Transverse colon (tissue), 4 donors: ENCODE measurements at regions of chr9 and their contacts with region 1.

Region 1: DNA sequence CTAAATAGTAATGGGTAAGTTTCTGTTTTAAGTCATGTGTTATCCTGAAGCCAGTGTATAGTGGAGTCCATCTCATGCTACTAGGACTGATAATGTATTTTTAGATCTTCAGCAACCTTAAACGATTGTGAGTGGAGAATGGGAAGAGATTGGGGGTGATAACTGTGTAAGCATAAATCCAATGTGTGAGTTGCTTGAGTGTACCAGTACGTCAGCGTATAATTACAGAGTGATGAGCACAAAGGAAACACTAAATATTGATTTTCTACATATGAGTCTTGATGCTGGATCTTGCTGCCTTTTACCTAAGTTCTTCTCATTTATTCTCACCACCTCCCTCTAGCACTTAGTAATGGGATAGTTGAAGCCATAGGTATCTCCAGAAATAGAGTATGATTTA is 16.3 kb upstream of the IZUMO3 start:
- DNase-seq: no peak
- H3K4me3 ChIP-seq: no peak overlapping the region
- H3K27ac ChIP-seq: no peak overlapping the region
- H3K4me1 ChIP-seq: no peaks in the 10 kb centered on the region
- H3K27me3 ChIP-seq: no peaks in the 10 kb centered on the region
- CTCF ChIP-seq: no peak
- EP300 ChIP-seq: no peak
- POLR2A ChIP-seq: no peak

Region 2: DNA sequence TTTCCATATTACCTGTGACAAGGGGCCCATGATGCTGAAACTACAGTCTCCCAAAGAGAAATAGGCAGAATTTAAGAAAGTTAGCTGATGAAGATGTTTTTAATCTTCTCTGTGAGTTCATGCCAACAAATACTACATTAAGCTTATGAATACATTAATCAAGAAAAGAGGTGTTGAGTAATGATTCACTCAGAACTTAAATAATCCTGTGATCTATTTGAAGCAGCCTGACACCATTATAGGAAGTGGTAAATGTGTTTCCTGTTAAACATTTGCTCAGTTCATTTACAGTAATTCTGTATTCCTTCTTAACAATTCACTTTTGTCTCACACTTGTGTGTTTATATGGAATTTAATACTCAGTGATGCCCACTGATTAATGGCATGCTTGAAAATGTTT is 58.8 kb after region 1 on chr9:
- in situ Hi-C with region 1: loop called in 1 of 4 experiments (anchors 10 kb)
- intact Hi-C with region 1: no loop called
- DNase-seq: no peak
- H3K4me3 ChIP-seq: no peak overlapping the region
- H3K27ac ChIP-seq: no peak overlapping the region
- H3K4me1 ChIP-seq: no peaks in the 10 kb centered on the region
- H3K27me3 ChIP-seq: no peaks in the 10 kb centered on the region
- CTCF ChIP-seq: no peak
- EP300 ChIP-seq: no peak
- POLR2A ChIP-seq: no peak

Region 3: DNA sequence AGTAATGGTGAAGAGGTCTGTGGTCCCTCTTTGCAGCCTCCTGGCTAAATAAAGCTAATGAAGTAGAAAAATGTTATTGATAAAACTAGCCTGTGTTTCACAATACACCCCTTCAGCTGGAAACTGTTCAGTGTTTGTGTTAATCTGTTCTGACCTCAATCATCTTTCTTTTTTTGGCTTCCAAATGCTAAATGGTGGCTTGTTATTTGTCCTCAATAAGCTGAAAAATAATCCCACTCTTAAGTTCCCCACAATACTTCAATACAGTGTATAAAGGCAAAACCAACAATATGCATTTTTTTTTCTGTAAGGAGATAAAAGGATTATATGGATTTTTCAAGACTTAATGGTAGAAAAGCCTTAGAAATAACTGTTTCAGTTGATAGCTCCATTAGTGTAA is 555.8 kb after region 1 on chr9:
- in situ Hi-C with region 1: no loop called
- intact Hi-C with region 1: no loop called
- DNase-seq: no peak
- H3K4me3 ChIP-seq: no peak overlapping the region
- H3K27ac ChIP-seq: no peak overlapping the region
- H3K4me1 ChIP-seq: no peaks in the 10 kb centered on the region
- H3K27me3 ChIP-seq: no peaks in the 10 kb centered on the region
- CTCF ChIP-seq: no peak
- EP300 ChIP-seq: no peak
- POLR2A ChIP-seq: no peak